Activated naive CD4-positive, alpha-beta T cell treated with anti-CD3 and anti-CD28 coated beads, Interleukin-2, amount 10 ng/mL, durations not matched to agents 7 days and 5 days (primary cell): ENCODE measurements at regions of chr15 and their contacts with region 1.

Region 1: DNA sequence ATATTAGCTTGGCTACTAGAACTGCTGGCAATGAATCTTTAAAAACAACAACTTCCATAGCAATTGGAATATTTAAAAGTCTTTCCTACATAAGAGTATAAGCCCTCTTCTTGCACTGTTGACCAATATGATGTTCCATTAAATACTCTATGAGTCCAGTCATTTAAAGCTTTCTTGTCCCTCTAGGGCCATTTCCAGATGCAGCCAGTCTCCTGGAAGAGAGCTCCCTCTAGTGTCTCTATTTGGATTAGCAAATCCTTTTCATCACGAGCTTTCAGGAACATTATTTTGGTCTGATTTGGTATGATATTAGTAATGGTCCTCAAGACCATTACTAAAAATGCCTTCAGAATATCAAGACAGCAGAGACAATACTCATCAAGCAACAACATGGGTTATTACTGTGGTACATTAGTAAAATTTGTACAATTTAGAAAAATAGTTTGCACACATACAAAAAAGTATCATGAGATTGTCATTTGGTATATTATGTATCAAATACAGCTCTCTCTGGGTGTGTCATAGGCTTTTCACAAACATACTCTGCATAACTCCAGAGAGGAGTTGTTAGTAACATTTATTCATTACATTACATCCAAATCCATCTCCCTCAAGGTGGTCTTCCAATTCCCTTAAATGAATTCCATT is 101.3 kb downstream of the DPH6 start:
- DNase-seq: no peak
- H3K4me3 Mint-ChIP-seq: no peak overlapping the region
- H3K27ac Mint-ChIP-seq: no peak overlapping the region
- H3K4me1 Mint-ChIP-seq: no peaks in the 10 kb centered on the region
- H3K27me3 Mint-ChIP-seq: no peaks in the 10 kb centered on the region

Region 2: DNA sequence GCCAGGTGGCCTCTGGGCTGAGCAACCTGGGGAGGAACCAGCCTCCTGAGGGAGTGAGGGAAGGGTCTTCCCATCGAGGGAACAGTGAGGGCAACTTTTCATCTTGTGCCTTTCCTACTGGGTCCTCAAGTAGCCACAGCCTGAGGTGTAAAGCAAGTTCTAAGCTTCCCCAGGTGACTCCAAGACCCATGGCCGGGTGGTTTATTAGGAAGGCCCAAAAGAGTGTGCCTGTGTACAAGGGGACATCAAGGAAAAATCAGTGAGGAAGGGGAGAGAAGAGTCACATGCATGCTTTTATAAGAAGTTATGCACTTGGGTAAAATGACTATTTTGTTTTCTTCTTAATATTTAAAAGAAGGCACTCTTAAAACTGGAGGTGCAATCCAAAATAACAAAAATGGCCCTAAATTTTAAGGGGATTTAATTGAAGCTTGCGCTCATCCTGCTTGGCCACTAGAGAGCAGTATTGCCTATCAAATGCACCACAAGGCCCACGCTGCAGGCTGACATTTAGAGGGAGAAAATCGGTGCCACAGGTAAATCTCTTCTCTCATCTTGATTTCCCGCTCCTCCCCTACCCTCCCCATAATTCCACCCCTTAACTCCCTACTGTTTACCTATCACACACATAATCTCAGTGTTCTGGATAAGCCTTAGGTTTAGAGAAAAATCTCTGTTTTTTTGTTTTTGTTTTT is 366.3 kb before region 1 on chr15:
- CTCF ChIA-PET with region 1: interaction called, 40 read pairs
- DNase-seq: peak; percentile 48
- H3K4me3 Mint-ChIP-seq: no peak overlapping the region
- H3K27ac Mint-ChIP-seq: no peak overlapping the region
- H3K4me1 Mint-ChIP-seq: no peaks in the 10 kb centered on the region
- H3K27me3 Mint-ChIP-seq: no peaks in the 10 kb centered on the region

Region 3: DNA sequence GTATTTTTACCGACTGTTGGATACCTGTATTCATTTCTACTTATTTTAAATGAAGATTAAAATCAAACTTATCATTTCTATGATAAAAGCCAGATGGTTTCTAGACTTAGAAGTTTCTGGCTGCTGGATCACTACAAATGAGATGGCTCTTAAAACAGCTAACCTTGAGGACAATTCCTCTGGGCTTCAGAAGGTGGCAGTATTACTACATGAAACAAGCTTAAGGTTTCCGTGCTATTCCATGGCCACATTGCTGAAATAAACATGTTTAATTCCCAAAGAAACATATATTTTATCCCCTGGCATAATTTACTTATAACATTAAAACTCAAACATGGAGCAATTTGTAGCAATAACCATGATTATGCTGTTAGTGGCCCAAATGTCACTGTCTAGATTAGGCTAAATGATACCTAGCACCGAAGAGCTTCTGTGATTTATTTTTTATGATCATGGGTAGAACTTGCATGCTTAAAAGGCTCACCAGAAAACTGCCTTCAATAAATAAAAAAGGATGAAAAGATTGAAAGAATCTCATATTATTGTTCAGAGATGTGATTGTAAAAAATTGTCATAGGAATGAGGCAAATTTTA is 155.6 kb before region 1 on chr15:
- CTCF ChIA-PET with region 1: interaction called, 66 read pairs
- DNase-seq: no peak
- H3K4me3 Mint-ChIP-seq: no peak overlapping the region
- H3K27ac Mint-ChIP-seq: no peak overlapping the region
- H3K4me1 Mint-ChIP-seq: no peaks in the 10 kb centered on the region
- H3K27me3 Mint-ChIP-seq: no peaks in the 10 kb centered on the region

Region 4: DNA sequence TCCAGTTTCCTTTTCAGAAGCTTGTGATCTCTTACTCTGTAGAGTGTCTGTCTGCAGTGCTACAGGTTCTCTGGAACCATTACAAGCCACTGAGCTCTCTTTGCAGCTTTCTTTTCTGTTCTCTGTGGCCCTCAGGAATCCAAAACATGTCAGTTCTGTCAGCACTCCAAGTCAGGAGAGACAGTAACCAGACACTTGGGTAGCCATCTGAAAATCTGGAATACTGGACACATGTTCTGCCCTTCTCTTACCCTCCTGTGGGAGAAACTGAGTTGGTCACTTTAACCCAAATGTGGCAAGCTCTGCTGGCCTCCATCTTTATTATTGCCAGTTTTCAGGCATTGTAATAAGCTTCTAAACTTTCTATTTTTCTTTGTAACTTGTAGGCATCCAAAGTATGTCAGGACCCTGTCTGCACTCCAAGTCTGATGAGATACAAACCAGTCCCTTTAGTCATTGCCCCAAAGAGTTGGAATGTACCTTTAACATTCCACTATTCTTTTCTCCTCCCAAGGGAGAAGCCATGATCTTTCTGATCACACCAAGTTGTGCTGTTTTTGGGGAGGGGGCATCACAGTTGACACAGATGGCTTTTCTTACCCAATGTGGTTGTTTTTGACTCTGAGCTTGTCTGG is 82.4 kb before region 1 on chr15:
- CTCF ChIA-PET with region 1: no interaction called
- DNase-seq: no peak
- H3K4me3 Mint-ChIP-seq: no peak overlapping the region
- H3K27ac Mint-ChIP-seq: no peak overlapping the region
- H3K4me1 Mint-ChIP-seq: no peaks in the 10 kb centered on the region
- H3K27me3 Mint-ChIP-seq: no peaks in the 10 kb centered on the region

Region 5: GRCh38 chr15:35379972-35380371 is 64.7 kb before region 1 on chr15:
- CTCF ChIA-PET with region 1: no interaction called
- DNase-seq: no peak
- H3K4me3 Mint-ChIP-seq: no peak overlapping the region
- H3K27ac Mint-ChIP-seq: no peak overlapping the region
- H3K4me1 Mint-ChIP-seq: no peaks in the 10 kb centered on the region
- H3K27me3 Mint-ChIP-seq: no peaks in the 10 kb centered on the region

Region 6: GRCh38 chr15:35427091-35427490 is 17.6 kb before region 1 on chr15:
- CTCF ChIA-PET with region 1: interaction called, 12 read pairs
- DNase-seq: no peak
- H3K4me3 Mint-ChIP-seq: no peak overlapping the region
- H3K27ac Mint-ChIP-seq: no peak overlapping the region
- H3K4me1 Mint-ChIP-seq: no peaks in the 10 kb centered on the region
- H3K27me3 Mint-ChIP-seq: no peaks in the 10 kb centered on the region

Region 7: DNA sequence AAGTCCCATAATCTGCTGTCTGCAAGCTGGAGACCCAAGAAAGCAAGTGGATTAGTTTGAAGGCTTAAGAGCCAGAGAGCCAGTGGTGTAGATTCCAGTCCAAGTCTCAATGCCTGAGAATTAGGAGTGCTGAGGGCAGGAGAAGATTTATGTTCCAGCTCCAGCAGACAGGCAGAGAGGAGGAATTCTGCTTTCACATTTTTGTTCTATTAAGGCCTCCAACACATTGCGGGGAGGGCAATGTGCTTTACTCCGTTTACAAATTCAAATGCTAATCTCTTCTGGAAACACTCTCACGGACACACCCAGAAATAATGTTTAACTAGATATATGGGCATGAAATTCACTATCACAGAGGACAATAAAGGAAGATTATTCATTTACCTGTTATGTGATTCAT is 47.3 kb after region 1 on chr15:
- CTCF ChIA-PET with region 1: no interaction called
- DNase-seq: no peak
- H3K4me3 Mint-ChIP-seq: no peak overlapping the region
- H3K27ac Mint-ChIP-seq: no peak overlapping the region
- H3K4me1 Mint-ChIP-seq: no peaks in the 10 kb centered on the region
- H3K27me3 Mint-ChIP-seq: no peaks in the 10 kb centered on the region

Region 8: GRCh38 chr15:35697549-35698299 is 253.0 kb after region 1 on chr15:
- CTCF ChIA-PET with region 1: no interaction called
- DNase-seq: no peak
- H3K4me3 Mint-ChIP-seq: no peak overlapping the region
- H3K27ac Mint-ChIP-seq: no peak overlapping the region
- H3K4me1 Mint-ChIP-seq: no peaks in the 10 kb centered on the region
- H3K27me3 Mint-ChIP-seq: no peaks in the 10 kb centered on the region